Activated naive CD4-positive, alpha-beta T cell treated with anti-CD3 and anti-CD28 coated beads for 36 hours (primary cell): ENCODE measurements at regions of chr2 and their contacts with region 1.

Region 1: GRCh38 chr2:181077128-181077709 is 96.8 kb downstream of the UBE2E3 start:
- DNase-seq: peak; percentile 8
- H3K4me3 Mint-ChIP-seq: no peak overlapping the region
- H3K27ac Mint-ChIP-seq: no peak overlapping the region
- H3K4me1 Mint-ChIP-seq: peaks cover 6% of the 10 kb centered on the region
- H3K27me3 Mint-ChIP-seq: no peaks in the 10 kb centered on the region

Region 2: GRCh38 chr2:181466661-181467576 is 389.7 kb after region 1 on chr2:
- CTCF ChIA-PET with region 1: interaction called, 5 read pairs
- intact Hi-C with region 1: loop called (anchors 1 kb)
- DNase-seq: peak; percentile 92
- H3K4me3 Mint-ChIP-seq: no peak overlapping the region
- H3K27ac Mint-ChIP-seq: peak overlapping the region; percentile 54
- H3K4me1 Mint-ChIP-seq: peaks cover 86% of the 10 kb centered on the region
- H3K27me3 Mint-ChIP-seq: no peaks in the 10 kb centered on the region

Region 3: DNA sequence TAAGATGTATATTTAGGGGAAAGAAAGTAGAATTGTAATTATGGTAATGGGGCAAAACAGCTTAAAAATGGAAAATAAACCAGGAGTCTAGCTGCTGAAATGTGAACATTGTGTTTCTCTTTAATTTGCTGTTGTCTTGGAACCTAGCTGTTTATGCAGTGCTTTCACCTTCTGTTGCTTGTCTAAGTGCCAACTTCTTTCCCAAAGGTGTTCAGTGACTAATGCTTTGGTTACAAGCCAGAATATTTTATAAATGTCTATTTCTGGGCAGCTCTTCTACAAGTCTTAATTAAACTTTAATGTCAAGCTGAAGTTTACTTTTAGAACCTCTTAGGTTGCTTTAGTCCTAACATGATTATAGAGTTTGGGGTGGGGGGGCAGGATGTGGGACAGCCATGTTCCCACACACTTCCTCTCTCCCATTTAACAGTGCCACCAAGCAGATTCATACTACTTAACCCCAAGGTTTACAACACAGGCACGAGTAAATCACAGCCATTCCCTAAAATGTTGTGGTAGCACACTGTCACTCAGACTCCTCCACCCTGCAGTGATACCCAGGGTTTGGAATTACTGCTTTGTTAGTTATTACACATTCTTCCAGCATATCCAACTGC is 440.6 kb after region 1 on chr2:
- CTCF ChIA-PET with region 1: no interaction called
- intact Hi-C with region 1: loop called (anchors 5 kb)
- DNase-seq: no peak
- H3K4me3 Mint-ChIP-seq: no peak overlapping the region
- H3K27ac Mint-ChIP-seq: no peak overlapping the region
- H3K4me1 Mint-ChIP-seq: peaks cover 34% of the 10 kb centered on the region
- H3K27me3 Mint-ChIP-seq: no peaks in the 10 kb centered on the region

Region 4: GRCh38 chr2:181573140-181573736 is 496.0 kb after region 1 on chr2:
- CTCF ChIA-PET with region 1: no interaction called
- intact Hi-C with region 1: loop called (anchors 5 kb)
- DNase-seq: no peak
- H3K4me3 Mint-ChIP-seq: no peak overlapping the region
- H3K27ac Mint-ChIP-seq: no peak overlapping the region
- H3K4me1 Mint-ChIP-seq: no peaks in the 10 kb centered on the region
- H3K27me3 Mint-ChIP-seq: peaks cover 4% of the 10 kb centered on the region

Region 5: DNA sequence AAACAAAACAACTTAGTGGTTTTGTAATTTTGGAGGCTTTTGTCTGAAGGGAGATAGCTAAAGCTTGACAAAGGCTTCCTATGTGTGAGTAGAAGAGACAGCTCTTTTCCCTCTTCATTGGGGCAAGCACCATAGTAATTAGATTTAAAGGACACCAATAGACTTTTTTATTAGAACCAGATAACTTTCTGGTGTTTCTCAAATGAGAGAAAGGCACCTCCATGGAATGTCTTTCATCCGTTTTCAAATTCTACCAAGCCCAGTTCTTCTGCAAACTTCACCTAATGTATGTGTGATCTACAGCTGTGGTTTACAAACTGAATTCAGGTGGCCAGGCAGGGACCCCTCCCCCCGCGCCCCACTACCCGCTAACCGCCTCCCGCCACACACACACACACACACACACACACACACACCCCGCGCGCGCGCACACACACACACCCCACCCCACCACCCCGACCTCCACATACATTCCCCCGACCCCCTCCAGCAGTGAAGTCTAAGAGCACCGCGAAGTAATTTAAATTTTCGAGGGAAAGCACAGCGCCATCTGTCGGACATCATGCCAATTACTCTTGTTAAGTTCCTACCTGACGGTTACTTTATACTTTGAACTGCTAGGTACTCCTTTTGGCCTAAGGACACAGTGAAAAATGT is 876.8 kb after region 1 on chr2:
- CTCF ChIA-PET with region 1: no interaction called
- intact Hi-C with region 1: loop called (anchors 1 kb)
- DNase-seq: peak; percentile 82
- H3K4me3 Mint-ChIP-seq: peak overlapping the region; percentile 17
- H3K27ac Mint-ChIP-seq: no peak overlapping the region
- H3K4me1 Mint-ChIP-seq: peaks cover 9% of the 10 kb centered on the region
- H3K27me3 Mint-ChIP-seq: peaks cover 19% of the 10 kb centered on the region

Region 6: DNA sequence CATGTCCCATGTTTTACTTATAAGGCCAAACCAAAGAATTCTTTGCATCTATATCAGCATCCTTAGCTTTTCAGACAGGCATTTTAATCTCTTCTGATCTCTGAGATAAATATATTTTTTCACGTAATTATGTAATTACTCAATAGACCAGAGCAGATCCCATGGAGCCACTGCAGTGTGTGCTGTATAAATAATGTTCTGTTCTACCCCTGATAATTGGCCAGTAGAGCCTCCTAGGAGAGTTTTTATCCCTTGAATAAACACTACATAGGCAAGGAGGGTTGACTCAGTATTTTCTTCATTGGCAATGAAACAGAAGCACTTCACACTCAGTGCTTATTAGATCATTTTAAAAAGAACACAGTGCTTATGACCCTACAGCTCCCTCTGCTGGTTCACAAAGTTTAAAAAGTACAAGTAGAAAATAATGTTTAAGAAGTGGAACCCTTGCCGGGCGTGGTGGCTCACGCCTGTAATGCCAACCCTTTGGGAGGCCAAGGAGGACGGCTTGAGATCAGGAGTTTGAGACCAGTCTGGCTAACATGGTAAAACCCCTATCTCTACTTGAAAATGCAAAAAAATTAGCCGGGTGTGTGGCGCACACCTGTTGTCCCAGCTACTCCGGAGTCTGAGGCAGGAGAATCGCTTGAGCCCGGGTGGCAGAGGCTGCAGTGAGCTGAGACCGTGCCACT is 1000.4 kb after region 1 on chr2:
- CTCF ChIA-PET with region 1: no interaction called
- intact Hi-C with region 1: loop called (anchors 5 kb)
- DNase-seq: peak; percentile 28
- H3K4me3 Mint-ChIP-seq: no peak overlapping the region
- H3K27ac Mint-ChIP-seq: no peak overlapping the region
- H3K4me1 Mint-ChIP-seq: no peaks in the 10 kb centered on the region
- H3K27me3 Mint-ChIP-seq: peaks cover 7% of the 10 kb centered on the region

Region 7: GRCh38 chr2:182650704-182651103 is 1573.5 kb after region 1 on chr2:
- CTCF ChIA-PET with region 1: no interaction called
- intact Hi-C with region 1: loop called (anchors 10 kb)
- DNase-seq: no peak
- H3K4me3 Mint-ChIP-seq: no peak overlapping the region
- H3K27ac Mint-ChIP-seq: no peak overlapping the region
- H3K4me1 Mint-ChIP-seq: peaks cover 5% of the 10 kb centered on the region
- H3K27me3 Mint-ChIP-seq: no peaks in the 10 kb centered on the region